ENCODE measurements at regions of chr17 and their contacts with region 1.

Region 1: GRCh38 chr17:46940621-46941404 is 17.9 kb downstream of the GOSR2 start:
- DNase-seq: peak; percentile 49
- H3K4me3 ChIP-seq: no peak overlapping the region
- H3K27ac ChIP-seq: no peak overlapping the region
- H3K4me1 ChIP-seq: no peaks in the 10 kb centered on the region
- H3K27me3 ChIP-seq: no peaks in the 10 kb centered on the region
- CTCF ChIP-seq: peak; percentile 90 to 96

Region 2: GRCh38 chr17:46841561-46842379 is 99.0 kb before region 1 on chr17:
- CTCF ChIA-PET with region 1: no interaction called
- dilution Hi-C with region 1: no loop called
- in situ Hi-C with region 1: no loop called
- intact Hi-C with region 1: loop called (anchors 1 kb)
- DNase-seq: no peak
- H3K4me3 ChIP-seq: no peak overlapping the region
- H3K27ac ChIP-seq: no peak overlapping the region
- H3K4me1 ChIP-seq: peaks cover 3% of the 10 kb centered on the region
- H3K27me3 ChIP-seq: no peaks in the 10 kb centered on the region
- CTCF ChIP-seq: peak; percentile 50 to 66

Region 3: DNA sequence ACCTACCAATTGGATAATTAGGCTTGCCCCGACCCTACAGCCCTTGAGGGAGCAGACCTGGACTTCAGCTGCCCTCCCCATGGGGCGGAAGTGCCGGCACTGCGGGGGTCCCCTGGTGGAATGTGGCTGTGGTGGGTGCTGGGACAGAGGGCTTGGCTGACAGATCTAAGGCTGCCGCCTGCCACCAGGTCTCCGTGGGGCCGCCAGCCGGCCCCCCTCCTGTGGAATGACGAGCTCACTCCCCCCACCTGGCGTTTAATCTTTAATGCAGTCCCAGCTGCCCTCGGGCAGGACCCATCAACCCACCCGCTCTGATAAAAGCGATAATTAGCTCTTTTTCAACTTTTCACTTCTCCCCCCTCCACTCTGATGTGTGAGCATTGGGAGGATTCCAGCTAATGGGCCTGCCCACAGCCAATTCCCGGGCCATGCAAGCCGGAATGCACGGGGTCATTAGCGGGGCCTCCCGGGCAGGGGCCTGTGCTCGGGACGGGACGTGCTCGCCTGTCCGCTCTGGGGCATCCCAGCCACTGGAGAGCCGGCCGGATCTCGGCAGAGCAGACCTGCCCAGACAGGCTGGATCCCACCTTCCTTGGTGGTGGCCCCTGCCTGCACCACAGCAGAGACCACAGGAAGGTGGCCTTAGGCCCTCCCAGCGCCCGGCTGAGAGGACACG is 46.2 kb before region 1 on chr17:
- CTCF ChIA-PET with region 1: no interaction called
- dilution Hi-C with region 1: no loop called
- in situ Hi-C with region 1: no loop called
- intact Hi-C with region 1: no loop called
- DNase-seq: no peak
- H3K4me3 ChIP-seq: no peak overlapping the region
- H3K27ac ChIP-seq: no peak overlapping the region
- H3K4me1 ChIP-seq: no peaks in the 10 kb centered on the region
- H3K27me3 ChIP-seq: peaks cover 7% of the 10 kb centered on the region
- CTCF ChIP-seq: no peak

Region 4: GRCh38 chr17:46929413-46929812 is 11.4 kb before region 1 on chr17:
- CTCF ChIA-PET with region 1: no interaction called
- dilution Hi-C with region 1: no loop called
- in situ Hi-C with region 1: no loop called
- intact Hi-C with region 1: no loop called
- DNase-seq: peak; percentile 69
- H3K4me3 ChIP-seq: no peak overlapping the region
- H3K27ac ChIP-seq: peak overlapping the region; percentile 43
- H3K4me1 ChIP-seq: peaks cover 24% of the 10 kb centered on the region
- H3K27me3 ChIP-seq: no peaks in the 10 kb centered on the region
- CTCF ChIP-seq: no peak

Region 5: GRCh38 chr17:46984892-46985291 is 44.1 kb after region 1 on chr17:
- CTCF ChIA-PET with region 1: no interaction called
- dilution Hi-C with region 1: loop called (anchors 5 kb)
- in situ Hi-C with region 1: no loop called
- intact Hi-C with region 1: no loop called
- DNase-seq: no peak
- H3K4me3 ChIP-seq: no peak overlapping the region
- H3K27ac ChIP-seq: no peak overlapping the region
- H3K4me1 ChIP-seq: no peaks in the 10 kb centered on the region
- H3K27me3 ChIP-seq: peaks cover 1% of the 10 kb centered on the region
- CTCF ChIP-seq: no peak

Region 6: GRCh38 chr17:46995841-46996571 is 55.2 kb after region 1 on chr17:
- CTCF ChIA-PET with region 1: no interaction called
- dilution Hi-C with region 1: no loop called
- in situ Hi-C with region 1: no loop called
- intact Hi-C with region 1: loop called (anchors 1 kb)
- DNase-seq: peak; percentile 57
- H3K4me3 ChIP-seq: no peak overlapping the region
- H3K27ac ChIP-seq: no peak overlapping the region
- H3K4me1 ChIP-seq: no peaks in the 10 kb centered on the region
- H3K27me3 ChIP-seq: no peaks in the 10 kb centered on the region
- CTCF ChIP-seq: no peak

Measured in mammary epithelial cell (primary cell).